Activated naive CD8-positive, alpha-beta T cell treated with anti-CD3 and anti-CD28 coated beads, Interleukin-2, amount 10 ng/mL, durations not matched to agents 7 days and 5 days (primary cell): ENCODE measurements at regions of chr12 and their contacts with region 1.

Region 1: DNA sequence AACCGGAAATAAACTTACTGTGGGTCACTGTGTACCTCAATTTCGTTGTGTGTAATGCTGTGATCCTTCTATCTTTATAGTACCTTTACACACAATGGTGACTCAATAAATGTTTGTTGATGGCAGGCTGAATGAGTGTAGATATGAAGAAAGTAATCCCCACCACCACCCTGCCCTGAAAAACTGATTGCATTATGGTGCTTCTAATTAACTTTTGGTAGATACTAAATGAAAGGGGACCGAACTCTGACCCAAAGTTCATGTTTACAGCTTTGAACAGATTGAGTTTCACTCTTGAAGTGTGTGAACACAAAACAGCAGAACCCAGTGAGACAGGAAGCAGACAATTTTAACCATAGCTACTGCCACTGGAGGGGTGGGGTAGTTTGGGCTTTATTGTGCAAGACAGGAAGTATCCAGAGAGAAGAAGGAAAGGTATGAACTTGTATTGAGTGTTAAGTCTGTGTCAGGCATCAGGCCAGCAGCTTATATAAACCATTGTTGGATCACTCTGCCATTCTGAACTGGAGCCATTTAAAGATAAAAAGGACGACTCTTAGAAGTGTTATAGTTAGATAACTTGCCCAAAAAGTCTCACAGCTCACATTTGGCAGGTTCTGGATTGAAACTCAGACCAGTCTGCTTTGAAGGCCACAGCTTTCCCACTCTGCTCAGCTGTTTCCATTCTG is 197.0 kb upstream of the AMIGO2 start:
- DNase-seq: no peak
- ATAC-seq: peak; percentile 96
- H3K4me3 Mint-ChIP-seq: peak overlapping the region; percentile 75
- H3K27ac Mint-ChIP-seq: peak overlapping the region; percentile 91
- H3K4me1 Mint-ChIP-seq: peaks cover 57% of the 10 kb centered on the region
- H3K27me3 Mint-ChIP-seq: no peaks in the 10 kb centered on the region

Region 2: DNA sequence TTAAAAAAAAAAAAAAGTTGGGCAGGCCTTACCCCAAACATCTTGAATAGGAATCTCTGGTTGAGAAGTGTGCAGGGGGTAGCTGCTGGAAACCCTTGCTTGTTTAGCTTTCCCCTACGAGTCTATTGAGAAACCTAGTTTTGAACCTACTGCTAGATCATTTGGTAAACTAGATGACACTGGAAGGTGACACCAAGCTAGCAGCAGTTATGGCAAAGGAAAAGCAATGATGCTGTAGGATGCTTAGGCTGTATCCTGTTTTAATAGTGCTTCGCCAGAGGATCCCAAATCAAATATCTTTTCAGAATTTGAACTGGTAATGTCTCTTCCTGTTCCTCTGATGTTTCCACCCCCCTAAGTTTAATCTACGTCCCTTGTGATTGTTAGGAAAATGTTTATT is 202.8 kb before region 1 on chr12:
- POLR2A ChIA-PET with region 1: no interaction called
- DNase-seq: no peak
- ATAC-seq: no peak
- H3K4me3 Mint-ChIP-seq: no peak overlapping the region
- H3K27ac Mint-ChIP-seq: no peak overlapping the region
- H3K4me1 Mint-ChIP-seq: peaks cover 23% of the 10 kb centered on the region
- H3K27me3 Mint-ChIP-seq: no peaks in the 10 kb centered on the region

Region 3: GRCh38 chr12:47221256-47222023 is 55.3 kb before region 1 on chr12:
- POLR2A ChIA-PET with region 1: interaction called, 29 read pairs
- DNase-seq: no peak
- ATAC-seq: no peak
- H3K4me3 Mint-ChIP-seq: peak overlapping the region; percentile 82
- H3K27ac Mint-ChIP-seq: peak overlapping the region; percentile 86
- H3K4me1 Mint-ChIP-seq: peaks cover 49% of the 10 kb centered on the region
- H3K27me3 Mint-ChIP-seq: peaks cover 1% of the 10 kb centered on the region

Region 4: DNA sequence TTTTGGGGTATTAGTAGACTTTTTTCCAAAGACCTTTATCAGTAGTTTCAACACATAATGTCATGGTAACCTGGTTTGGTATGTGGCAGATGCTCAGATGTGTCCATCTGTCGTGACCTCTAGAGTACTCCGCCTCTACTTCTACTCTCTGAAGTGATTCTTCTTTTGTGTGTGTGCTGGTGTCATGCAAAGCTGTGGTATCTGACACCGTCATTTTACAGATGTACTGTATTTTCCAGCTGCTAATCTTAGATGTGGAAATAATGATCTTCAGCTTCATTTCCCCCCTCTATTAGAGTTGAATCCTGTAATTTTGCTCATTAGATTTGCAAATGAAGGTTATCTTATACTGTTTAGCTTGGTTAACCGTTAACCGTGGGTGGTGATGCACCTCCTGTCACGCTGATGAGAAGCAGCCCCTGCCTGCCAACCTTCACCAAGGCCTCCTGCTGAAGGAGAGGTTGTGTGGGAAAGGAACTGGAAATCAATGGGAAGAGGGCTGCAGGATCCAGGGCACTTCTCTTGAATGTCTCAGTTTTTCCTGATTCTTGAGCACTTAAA is 25.4 kb after region 1 on chr12:
- POLR2A ChIA-PET with region 1: interaction called, 20 read pairs
- DNase-seq: no peak
- ATAC-seq: peak; percentile 65
- H3K4me3 Mint-ChIP-seq: peak overlapping the region; percentile 45
- H3K27ac Mint-ChIP-seq: peak overlapping the region; percentile 76
- H3K4me1 Mint-ChIP-seq: peaks cover 55% of the 10 kb centered on the region
- H3K27me3 Mint-ChIP-seq: no peaks in the 10 kb centered on the region

Region 5: DNA sequence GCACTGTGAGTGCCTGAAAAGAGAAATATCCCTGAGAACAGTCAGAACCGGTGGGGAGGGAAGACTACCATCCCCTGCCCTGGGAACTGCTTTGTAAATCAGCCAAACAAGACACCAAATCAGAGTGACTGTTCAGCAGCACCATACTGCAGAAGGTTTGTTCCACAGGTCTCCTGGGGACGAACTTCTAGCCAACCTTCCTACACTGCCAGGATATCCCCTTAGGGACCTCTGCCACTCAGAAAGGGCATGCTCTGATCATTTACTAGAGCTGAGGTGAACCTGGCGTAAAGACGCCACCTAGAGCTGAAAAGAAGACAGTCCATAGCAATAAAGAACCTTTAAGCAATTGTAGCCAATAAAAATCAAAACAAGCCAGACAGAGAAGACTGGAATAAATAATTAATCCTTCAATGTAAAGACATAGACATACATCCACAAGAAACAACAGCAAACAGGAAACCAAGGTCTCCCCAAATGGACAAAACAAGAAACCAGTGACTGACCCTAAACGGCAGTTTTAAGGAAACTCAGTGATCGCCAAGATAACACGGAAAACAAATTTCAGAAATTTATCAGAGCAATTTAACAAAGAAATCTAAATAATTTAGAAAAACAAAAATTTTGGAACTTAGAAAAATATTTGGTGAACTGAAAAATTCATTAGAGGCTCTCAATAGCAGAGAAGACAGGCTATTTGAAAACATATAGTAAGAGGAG is 31.1 kb after region 1 on chr12:
- POLR2A ChIA-PET with region 1: interaction called, 20 read pairs
- DNase-seq: peak; percentile 47
- ATAC-seq: peak; percentile 93
- H3K4me3 Mint-ChIP-seq: peak overlapping the region; percentile 86
- H3K27ac Mint-ChIP-seq: peak overlapping the region; percentile 92
- H3K4me1 Mint-ChIP-seq: peaks cover 42% of the 10 kb centered on the region
- H3K27me3 Mint-ChIP-seq: no peaks in the 10 kb centered on the region

Region 6: DNA sequence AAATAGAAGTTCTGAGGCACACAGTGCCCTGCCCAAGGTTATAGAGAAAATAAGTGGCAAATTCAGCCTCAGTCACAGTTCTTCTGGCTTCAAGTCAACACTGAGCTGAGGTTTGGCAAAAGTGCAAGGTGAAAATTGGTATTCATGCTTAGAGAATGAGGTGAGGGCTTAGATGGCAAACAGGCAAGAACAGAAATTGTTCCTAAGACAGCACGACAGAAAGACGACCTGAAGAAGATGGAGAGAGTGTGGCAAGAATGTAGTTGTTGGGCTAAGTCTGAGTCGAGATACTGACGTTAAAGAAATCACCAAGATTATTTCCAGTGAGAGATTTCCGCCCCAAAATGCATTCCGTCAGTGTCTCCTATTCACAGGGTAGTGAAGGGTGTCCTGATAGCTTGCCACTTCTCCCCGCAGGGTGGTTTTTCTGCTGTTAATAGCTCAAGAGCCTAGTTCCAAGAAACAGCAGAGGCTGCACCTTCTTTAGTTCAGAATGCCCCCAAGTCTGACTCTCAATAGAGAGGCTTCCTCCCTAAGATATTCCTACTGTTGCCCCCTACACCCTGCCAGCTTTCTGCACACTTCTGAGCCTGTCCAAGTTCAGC is 63.7 kb after region 1 on chr12:
- POLR2A ChIA-PET with region 1: no interaction called
- DNase-seq: no peak
- ATAC-seq: no peak
- H3K4me3 Mint-ChIP-seq: no peak overlapping the region
- H3K27ac Mint-ChIP-seq: no peak overlapping the region
- H3K4me1 Mint-ChIP-seq: peaks cover 13% of the 10 kb centered on the region
- H3K27me3 Mint-ChIP-seq: no peaks in the 10 kb centered on the region

Region 7: GRCh38 chr12:47351526-47351925 is 74.8 kb after region 1 on chr12:
- POLR2A ChIA-PET with region 1: no interaction called
- DNase-seq: no peak
- ATAC-seq: no peak
- H3K4me3 Mint-ChIP-seq: no peak overlapping the region
- H3K27ac Mint-ChIP-seq: peak overlapping the region; percentile 60
- H3K4me1 Mint-ChIP-seq: peaks cover 62% of the 10 kb centered on the region
- H3K27me3 Mint-ChIP-seq: no peaks in the 10 kb centered on the region

Region 8: DNA sequence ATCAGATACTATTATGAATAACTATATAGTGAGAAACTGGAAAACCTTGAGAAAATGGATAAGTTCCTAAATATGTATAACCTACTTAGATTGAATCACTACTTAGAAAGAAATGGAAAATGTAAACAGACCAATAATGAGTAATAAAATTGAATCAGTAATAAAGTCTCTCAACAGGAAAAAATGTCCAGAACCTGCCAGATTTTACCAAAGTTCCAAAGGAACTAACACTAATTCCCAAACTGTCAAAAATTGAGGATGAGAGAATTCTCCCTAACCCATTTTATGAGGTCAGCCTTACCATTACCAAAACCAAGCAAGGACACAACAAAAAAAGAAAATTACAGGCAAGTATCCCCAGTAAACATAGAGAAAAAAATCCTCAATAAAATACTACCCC is 157.1 kb after region 1 on chr12:
- POLR2A ChIA-PET with region 1: no interaction called
- DNase-seq: no peak
- ATAC-seq: no peak
- H3K4me3 Mint-ChIP-seq: no peak overlapping the region
- H3K27ac Mint-ChIP-seq: no peak overlapping the region
- H3K4me1 Mint-ChIP-seq: no peaks in the 10 kb centered on the region
- H3K27me3 Mint-ChIP-seq: peaks cover 2% of the 10 kb centered on the region